B cell (primary cell): ENCODE measurements at regions of chr3 and their contacts with region 1.

Region 1: DNA sequence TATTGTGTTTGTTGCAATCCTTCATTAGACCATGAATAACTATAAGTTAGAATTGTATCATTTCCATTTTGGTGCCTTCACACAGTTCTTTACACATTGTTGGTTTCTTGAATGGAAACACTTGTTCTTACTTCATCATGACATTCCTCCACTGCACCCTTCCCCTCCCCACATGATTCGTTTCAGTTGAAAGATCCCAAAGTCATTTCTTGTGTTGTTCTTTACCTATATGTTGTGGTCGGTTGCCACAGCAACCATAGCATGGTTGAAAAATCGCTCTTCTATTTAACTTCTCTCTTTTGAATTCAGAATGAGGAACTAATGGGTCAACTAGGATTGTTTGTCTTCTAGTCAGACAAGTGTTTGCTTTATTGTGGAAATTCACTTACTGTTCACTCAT is 103.3 kb downstream of the IL1RAP start:
- DNase-seq: peak; percentile 94
- ATAC-seq: peak; percentile 86
- H3K4me3 ChIP-seq: no peak overlapping the region
- H3K4me3 Mint-ChIP-seq: peak overlapping the region; percentile 55
- H3K27ac ChIP-seq: peak overlapping the region; percentile 66 to 89
- H3K27ac Mint-ChIP-seq: peak overlapping the region; percentile 80
- H3K4me1 ChIP-seq: peaks cover 24 to 29% of the 10 kb centered on the region in 2 donors
- H3K4me1 Mint-ChIP-seq: peaks cover 41% of the 10 kb centered on the region
- H3K27me3 ChIP-seq: no peaks in the 10 kb centered on the region
- H3K27me3 Mint-ChIP-seq: no peaks in the 10 kb centered on the region
- CTCF ChIP-seq: no peak

Region 2: GRCh38 chr3:190513409-190514162 is 103.6 kb before region 1 on chr3 and contains the start of gene IL1RAP:
- CTCF ChIA-PET with region 1: no interaction called
- POLR2A ChIA-PET with region 1: no interaction called
- intact Hi-C with region 1: loop called (anchors 1 kb)
- DNase-seq: peak; percentile 91
- ATAC-seq: peak; percentile 95
- H3K4me3 ChIP-seq: peak within 1 kb of the TSS; percentile 87 to 96 (median 95)
- H3K4me3 Mint-ChIP-seq: peak within 1 kb of the TSS; percentile 90
- H3K27ac ChIP-seq: peak within 1 kb of the TSS; percentile 54 to 75
- H3K27ac Mint-ChIP-seq: peak within 1 kb of the TSS; percentile 86
- H3K4me1 ChIP-seq: peaks cover 13 to 17% of the 10 kb centered on the region in 2 donors
- H3K4me1 Mint-ChIP-seq: peaks cover 23% of the 10 kb centered on the region
- H3K27me3 ChIP-seq: peaks cover 0 to 3% (median 0%) of the 10 kb centered on the region in 4 experiments
- H3K27me3 Mint-ChIP-seq: peaks cover 6% of the 10 kb centered on the region
- CTCF ChIP-seq: peak; percentile 71
- total RNA-seq, gene IL1RAP: 11.5 and 13.4 TPM in 2 replicates

Region 3: GRCh38 chr3:190631295-190631694 is 14.1 kb after region 1 on chr3:
- CTCF ChIA-PET with region 1: no interaction called
- POLR2A ChIA-PET with region 1: no interaction called
- intact Hi-C with region 1: loop called (anchors 2 kb)
- DNase-seq: no peak
- ATAC-seq: no peak
- H3K4me3 ChIP-seq: no peak overlapping the region
- H3K4me3 Mint-ChIP-seq: no peak overlapping the region
- H3K27ac ChIP-seq: no peak overlapping the region
- H3K27ac Mint-ChIP-seq: no peak overlapping the region
- H3K4me1 ChIP-seq: peaks cover 5% of the 10 kb centered on the region in 2 donors
- H3K4me1 Mint-ChIP-seq: peaks cover 6% of the 10 kb centered on the region
- H3K27me3 ChIP-seq: no peaks in the 10 kb centered on the region
- H3K27me3 Mint-ChIP-seq: no peaks in the 10 kb centered on the region
- CTCF ChIP-seq: no peak